BJ (cell line): ENCODE measurements at regions of chr14 and their contacts with region 1.

Region 1: DNA sequence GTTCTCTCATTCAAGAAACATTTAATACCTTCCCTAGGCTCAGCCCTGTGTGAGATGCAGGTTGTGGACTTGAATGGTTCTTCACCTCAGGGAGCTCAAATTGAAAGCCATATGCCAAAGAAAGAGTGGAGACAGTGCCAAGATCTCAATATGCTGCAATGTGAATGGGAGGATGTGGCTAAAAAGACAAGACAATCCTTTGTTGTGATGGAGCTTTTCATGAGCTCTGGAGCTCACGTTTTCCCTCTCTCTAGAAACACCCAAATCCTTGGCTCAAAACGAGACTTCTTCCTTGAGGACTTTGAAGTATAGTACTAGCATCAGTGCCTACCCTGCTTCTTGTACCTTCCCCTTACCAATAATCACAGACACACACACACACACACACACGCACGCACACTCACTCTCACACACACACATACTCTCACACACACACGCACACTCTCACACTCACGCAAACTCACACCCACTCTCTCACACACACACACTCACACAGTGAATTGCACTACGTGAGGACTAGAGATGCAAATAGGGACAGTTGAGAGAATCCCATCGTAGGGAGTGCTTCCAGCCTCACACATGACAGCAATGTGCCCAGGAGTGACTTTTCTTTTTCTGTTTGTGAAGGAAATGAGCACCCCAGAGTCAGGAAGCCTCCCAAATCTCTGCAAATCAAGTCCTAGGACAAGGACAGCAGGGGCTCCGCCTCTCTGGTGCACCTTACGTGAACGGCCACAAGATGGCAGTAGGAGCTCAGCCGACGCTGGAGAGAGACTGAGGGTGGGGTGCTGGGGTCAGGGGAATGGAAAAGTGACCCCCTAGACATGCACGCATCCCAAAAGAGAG is 231.4 kb downstream of the PCNX1 start:
- DNase-seq: no peak
- H3K4me3 ChIP-seq: no peak overlapping the region
- H3K27me3 ChIP-seq: no peaks in the 10 kb centered on the region
- CTCF ChIP-seq: peak; percentile 96

Region 2: GRCh38 chr14:71320107-71320733 is 181.5 kb after region 1 on chr14:
- CTCF ChIA-PET with region 1: interaction called, 16 read pairs
- POLR2A ChIA-PET with region 1: interaction called, 8 read pairs
- DNase-seq: peak; percentile 89
- H3K4me3 ChIP-seq: peak within 1 kb of the TSS; percentile 92
- H3K27me3 ChIP-seq: no peaks in the 10 kb centered on the region
- CTCF ChIP-seq: no peak

Region 3: DNA sequence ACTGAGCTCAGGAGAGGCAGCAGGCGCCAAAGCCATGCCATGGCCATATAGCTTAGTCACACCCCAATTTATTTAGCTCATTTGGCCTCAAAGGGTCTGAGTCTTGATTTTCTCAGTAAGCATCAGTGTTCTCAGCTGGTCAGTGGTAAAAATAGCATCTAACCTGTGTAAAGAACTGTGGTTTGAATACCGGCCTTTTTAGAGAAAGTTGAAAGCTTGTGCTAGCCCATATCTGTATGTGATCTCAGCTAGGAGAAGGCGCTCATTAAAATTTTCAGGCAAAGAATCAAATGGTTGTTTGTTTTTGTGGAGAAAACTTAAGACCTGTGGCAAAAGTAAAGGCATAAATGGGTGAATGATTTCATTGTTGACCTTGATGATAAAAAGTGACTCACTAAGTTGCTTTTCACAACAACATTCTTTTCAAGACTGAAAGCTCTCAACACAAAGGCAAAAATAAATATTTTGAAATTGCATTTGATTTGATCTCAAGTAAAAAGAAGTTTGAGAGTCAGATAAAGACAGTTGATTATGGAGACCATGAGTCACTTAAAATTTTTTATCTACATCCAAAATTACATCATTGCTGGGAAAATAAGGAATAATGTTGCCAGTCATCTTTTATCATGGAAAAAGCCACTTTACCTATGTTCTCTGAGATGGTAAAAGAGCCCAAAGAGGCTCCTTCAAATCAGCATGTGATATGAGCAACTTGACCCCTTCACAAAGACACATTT is 665.0 kb after region 1 on chr14:
- CTCF ChIA-PET with region 1: no interaction called
- POLR2A ChIA-PET with region 1: interaction called, 20 read pairs
- DNase-seq: peak; percentile 73
- H3K4me3 ChIP-seq: no peak overlapping the region
- H3K27me3 ChIP-seq: no peaks in the 10 kb centered on the region
- CTCF ChIP-seq: no peak

Region 4: DNA sequence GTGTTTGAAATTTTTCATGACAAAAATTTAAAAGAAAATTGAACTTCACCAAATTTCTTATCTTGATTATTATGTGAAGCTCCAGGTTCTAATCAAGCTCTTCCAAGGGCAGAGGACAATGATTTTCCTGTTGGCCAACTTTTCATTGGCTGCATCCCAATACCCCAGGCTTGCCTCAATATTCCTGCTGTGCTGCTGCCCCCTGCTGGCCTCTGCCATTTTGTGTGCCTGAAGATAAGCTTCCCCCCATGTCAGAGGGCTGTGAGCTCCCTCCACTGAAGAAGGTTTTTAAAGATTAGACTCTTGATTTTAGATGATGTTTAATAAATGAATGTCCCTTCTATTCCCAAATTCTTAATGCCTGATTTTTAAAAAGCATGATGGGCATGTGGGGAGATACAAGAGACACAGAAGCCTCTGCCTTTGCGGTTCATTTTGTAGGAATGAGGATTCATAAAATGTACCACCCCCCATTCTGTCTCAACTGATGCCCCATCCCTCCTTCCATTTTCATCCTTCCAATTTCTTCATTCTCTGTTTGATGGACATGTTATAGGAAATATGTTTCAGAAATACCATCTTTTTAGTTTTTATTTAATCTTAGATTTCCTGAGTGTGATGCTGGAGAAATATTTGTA is 716.8 kb after region 1 on chr14:
- CTCF ChIA-PET with region 1: interaction called, 13 read pairs
- POLR2A ChIA-PET with region 1: no interaction called
- DNase-seq: peak; percentile 5
- H3K4me3 ChIP-seq: no peak overlapping the region
- H3K27me3 ChIP-seq: 0 out of 2 replicates have a peak, but pooled peaks cover 1% of the 10 kb centered on the region
- CTCF ChIP-seq: peak; percentile 89